Breast epithelium (tissue), 4 donors: ENCODE measurements at regions of chr11 and their contacts with region 1.

Region 1: GRCh38 chr11:118610804-118611795 is 3.7 kb downstream of the PHLDB1 start:
- DNase-seq: peak; percentile 85 to 86
- H3K4me3 ChIP-seq: peak overlapping the region; percentile 72 to 79 (median 78)
- H3K27ac ChIP-seq: peak overlapping the region; percentile 92 to 94
- H3K4me1 ChIP-seq: peaks cover 0 to 7% of the 10 kb centered on the region in 2 donors
- H3K27me3 ChIP-seq: peaks cover 0 to 6% of the 10 kb centered on the region in 2 donors
- CTCF ChIP-seq: peak; percentile 53 to 78 (median 71)
- POLR2A ChIP-seq: no peak

Region 2: DNA sequence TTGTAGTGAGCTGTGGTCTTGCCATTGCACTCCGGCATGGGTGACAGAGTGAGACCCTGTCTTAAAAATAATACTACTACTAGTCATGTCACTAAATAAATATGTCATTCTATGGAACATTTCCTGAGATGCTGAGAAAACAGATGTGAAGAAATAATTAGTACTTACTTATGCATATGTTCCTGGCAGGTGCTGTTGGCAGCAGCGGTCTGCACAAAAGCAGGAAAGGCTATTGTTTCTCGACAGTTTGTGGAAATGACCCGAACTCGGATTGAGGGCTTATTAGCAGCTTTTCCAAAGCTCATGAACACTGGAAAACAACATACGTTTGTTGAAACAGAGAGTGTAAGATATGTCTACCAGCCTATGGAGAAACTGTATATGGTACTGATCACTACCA is 30.0 kb before region 1 on chr11:
- intact Hi-C with region 1: no loop called
- DNase-seq: no peak
- H3K4me3 ChIP-seq: no peak overlapping the region
- H3K27ac ChIP-seq: no peak overlapping the region
- H3K4me1 ChIP-seq: peaks cover 0 to 5% of the 10 kb centered on the region in 2 donors
- H3K27me3 ChIP-seq: no peaks in the 10 kb centered on the region
- CTCF ChIP-seq: no peak
- POLR2A ChIP-seq: no peak

Region 3: GRCh38 chr11:118660681-118661424 is 49.8 kb after region 1 on chr11:
- intact Hi-C with region 1: loop called (anchors 1 kb)
- DNase-seq: no peak
- H3K4me3 ChIP-seq: no peak overlapping the region
- H3K27ac ChIP-seq: no peak overlapping the region
- H3K4me1 ChIP-seq: peaks cover 4 to 7% of the 10 kb centered on the region in 2 donors
- H3K27me3 ChIP-seq: no peaks in the 10 kb centered on the region
- CTCF ChIP-seq: no peak
- POLR2A ChIP-seq: no peak